A673 (cell line): ENCODE measurements at regions of chr6 and their contacts with region 1.

Region 1: GRCh38 chr6:30483677-30484279 is 5.5 kb upstream of the HLA-E start:
- DNase-seq: peak; percentile 69
- H3K4me3 ChIP-seq: no peak overlapping the region
- H3K27ac ChIP-seq: no peak overlapping the region
- H3K4me1 ChIP-seq: peaks cover 13% of the 10 kb centered on the region
- H3K27me3 ChIP-seq: peaks cover 35% of the 10 kb centered on the region
- CTCF ChIP-seq: peak; percentile 67

Region 2: GRCh38 chr6:30441171-30441570 is 42.6 kb before region 1 on chr6:
- CTCF ChIA-PET with region 1: no interaction called
- POLR2A ChIA-PET with region 1: no interaction called
- intact Hi-C with region 1: no loop called
- DNase-seq: no peak
- H3K4me3 ChIP-seq: no peak overlapping the region
- H3K27ac ChIP-seq: no peak overlapping the region
- H3K4me1 ChIP-seq: no peaks in the 10 kb centered on the region
- H3K27me3 ChIP-seq: peaks cover 98% of the 10 kb centered on the region
- CTCF ChIP-seq: no peak

Region 3: GRCh38 chr6:30533460-30534294 is 49.9 kb after region 1 on chr6:
- CTCF ChIA-PET with region 1: interaction called, 20 read pairs
- POLR2A ChIA-PET with region 1: interaction called, 3 read pairs
- intact Hi-C with region 1: loop called (anchors 1 kb)
- DNase-seq: no peak
- H3K4me3 ChIP-seq: no peak overlapping the region
- H3K27ac ChIP-seq: no peak overlapping the region
- H3K4me1 ChIP-seq: no peaks in the 10 kb centered on the region
- H3K27me3 ChIP-seq: no peaks in the 10 kb centered on the region
- CTCF ChIP-seq: no peak

Region 4: GRCh38 chr6:30541515-30542403 is 58.0 kb after region 1 on chr6:
- CTCF ChIA-PET with region 1: interaction called, 21 read pairs
- POLR2A ChIA-PET with region 1: no interaction called
- intact Hi-C with region 1: loop called (anchors 1 kb)
- DNase-seq: peak; percentile 85
- H3K4me3 ChIP-seq: peak overlapping the region; percentile 32
- H3K27ac ChIP-seq: no peak overlapping the region
- H3K4me1 ChIP-seq: peaks cover 4% of the 10 kb centered on the region
- H3K27me3 ChIP-seq: no peaks in the 10 kb centered on the region
- CTCF ChIP-seq: peak; percentile 99